RWPE1 (cell line): ENCODE measurements at regions of chr4 and their contacts with region 1.

Region 1: GRCh38 chr4:140359562-140360427 is 13.7 kb upstream of the SCOC start:
- DNase-seq: peak; percentile 55
- H3K27ac ChIP-seq: no peak overlapping the region
- CTCF ChIP-seq: peak; percentile 88

Region 2: GRCh38 chr4:140373328-140374129 is 13.7 kb after region 1 on chr4 and contains the start of gene SCOC:
- CTCF ChIA-PET with region 1: interaction called, 11 read pairs
- POLR2A ChIA-PET with region 1: no interaction called
- DNase-seq: peak; percentile 100
- H3K27ac ChIP-seq: peak within 1 kb of the TSS; percentile 98
- CTCF ChIP-seq: no peak

Region 3: DNA sequence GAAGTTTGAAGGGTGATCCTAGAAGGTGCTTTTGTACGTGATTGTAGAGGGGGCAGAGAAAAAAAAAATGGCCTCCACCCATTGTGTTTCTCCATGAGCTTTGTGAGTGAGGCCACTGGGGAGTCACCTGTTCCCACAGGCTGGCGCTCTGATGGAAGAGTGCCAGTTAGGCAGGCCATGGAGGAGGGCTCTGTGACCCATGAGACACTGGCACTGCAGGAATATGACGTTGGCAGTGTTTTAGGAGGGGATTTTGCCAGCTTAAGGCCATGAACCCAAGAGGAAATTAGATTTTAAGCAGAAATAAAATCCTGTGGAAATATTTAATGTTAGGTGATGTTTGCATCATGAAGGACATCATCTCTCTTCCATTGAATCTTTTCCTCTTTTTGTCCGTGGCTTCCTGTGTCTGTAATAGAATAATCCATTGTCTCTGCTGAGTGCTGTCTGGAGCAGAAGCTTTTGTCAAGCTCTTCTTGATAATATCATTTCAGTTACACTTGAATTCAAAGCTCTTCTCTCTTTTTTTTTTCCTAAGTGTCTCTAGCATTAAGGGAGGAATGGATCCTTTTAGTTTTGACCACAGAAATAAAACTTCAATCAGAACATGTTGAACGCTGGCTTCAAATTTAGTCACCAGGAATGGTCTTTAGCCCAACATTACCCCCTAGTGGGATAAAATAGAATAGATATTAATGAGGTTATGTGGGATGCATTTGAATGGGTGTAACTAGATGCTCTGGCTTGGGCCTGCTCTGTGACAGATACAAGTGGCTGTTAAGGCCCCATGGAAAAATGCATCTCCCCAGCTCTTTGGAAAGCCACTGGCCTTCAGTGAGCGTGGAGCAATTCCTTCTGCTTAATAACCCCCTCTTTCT is 250.0 kb after region 1 on chr4:
- CTCF ChIA-PET with region 1: interaction called, 26 read pairs
- POLR2A ChIA-PET with region 1: no interaction called
- DNase-seq: peak; percentile 66
- H3K27ac ChIP-seq: no peak overlapping the region
- CTCF ChIP-seq: peak; percentile 51

Region 4: DNA sequence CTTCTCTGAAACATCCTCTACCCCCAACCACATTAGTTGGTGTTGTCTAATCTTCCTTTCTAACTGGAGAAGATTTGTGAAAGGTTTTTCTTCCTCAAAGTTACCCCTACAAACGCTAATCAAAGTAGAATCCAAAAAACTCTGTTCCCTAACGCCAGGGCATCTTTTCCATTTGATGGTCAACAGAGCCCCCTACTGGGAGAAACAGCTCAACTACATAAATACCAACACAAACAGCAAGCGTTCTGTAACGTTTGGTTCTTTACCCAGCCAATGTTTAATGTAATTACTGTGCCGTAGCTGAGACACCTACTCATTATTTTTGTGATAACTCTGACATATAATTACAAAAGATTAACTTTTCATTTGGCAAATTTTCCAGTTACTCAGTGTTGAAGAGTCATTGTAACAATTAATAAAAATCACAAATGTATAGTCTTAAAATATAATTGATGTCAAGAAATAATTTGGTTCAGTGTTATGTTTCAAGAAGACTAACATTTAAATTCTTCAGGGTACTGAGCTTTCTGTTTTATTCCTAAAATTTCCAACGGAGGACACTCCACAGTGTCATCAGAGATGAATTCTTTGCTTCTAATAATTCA is 491.3 kb after region 1 on chr4:
- CTCF ChIA-PET with region 1: interaction called, 14 read pairs
- POLR2A ChIA-PET with region 1: no interaction called
- DNase-seq: peak; percentile 64
- H3K27ac ChIP-seq: no peak overlapping the region
- CTCF ChIP-seq: peak; percentile 70